ENCODE measurements at regions of chr2 and their contacts with region 1.

Region 1: GRCh38 chr2:219530048-219530963 is 13.3 kb downstream of the CHPF start:
- DNase-seq: peak; percentile 57
- H3K4me3 ChIP-seq: no peak overlapping the region
- H3K27ac ChIP-seq: no peak overlapping the region
- H3K4me1 ChIP-seq: no peaks in the 10 kb centered on the region
- H3K27me3 ChIP-seq: peaks cover 2% of the 10 kb centered on the region
- CTCF ChIP-seq: peak; percentile 93 to 99

Region 2: DNA sequence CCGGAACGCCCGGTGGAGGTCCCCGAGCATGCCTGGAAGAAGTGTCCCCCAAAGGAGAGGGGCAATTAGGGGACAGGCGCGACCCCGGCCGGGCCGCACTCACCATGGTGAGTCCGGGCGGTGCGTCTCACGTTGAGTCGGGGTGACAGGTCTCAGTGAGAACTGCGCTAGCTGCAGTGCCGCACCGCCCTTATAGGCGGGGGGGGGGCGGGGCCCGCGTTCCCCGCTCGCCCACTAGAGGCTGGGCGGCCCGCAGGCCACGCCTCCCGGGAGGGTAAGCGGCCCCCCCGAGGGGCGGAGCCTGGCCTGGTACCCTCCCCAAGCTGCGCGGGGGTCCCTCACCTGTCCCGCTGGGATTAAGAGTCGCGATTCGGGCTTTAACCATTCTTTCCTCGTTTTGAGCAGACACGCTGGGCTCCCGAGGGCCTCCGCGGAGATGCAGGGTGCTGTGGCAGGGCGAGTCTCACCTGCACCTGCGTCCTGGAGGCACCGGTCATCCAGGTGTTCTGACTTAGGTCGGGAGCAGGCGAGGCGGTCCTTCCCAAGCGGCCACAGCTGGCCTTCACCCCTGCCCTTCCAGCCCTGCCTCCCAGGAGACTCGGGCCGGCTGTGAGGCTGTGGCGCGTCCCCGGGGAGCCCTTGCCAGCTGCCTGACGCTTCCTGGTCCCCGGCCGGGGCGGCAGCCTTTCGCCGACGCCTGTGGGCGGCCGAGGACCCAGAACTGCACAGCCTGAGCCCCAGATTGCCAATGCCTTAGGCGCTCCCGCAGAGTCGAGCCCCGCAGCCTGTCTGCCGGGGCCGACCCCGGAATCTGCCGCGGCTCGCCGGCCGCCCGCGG is 276.3 kb before region 1 on chr2 and contains the start of gene TUBA4A:
- CTCF ChIA-PET with region 1: no interaction called
- dilution Hi-C with region 1: no loop called
- in situ Hi-C with region 1: no loop called
- intact Hi-C with region 1: loop called (anchors 1 kb)
- DNase-seq: peak; percentile 83
- H3K4me3 ChIP-seq: peak within 1 kb of the TSS; percentile 69 to 82 (median 81)
- H3K27ac ChIP-seq: peak within 1 kb of the TSS; percentile 76
- H3K4me1 ChIP-seq: peaks cover 48% of the 10 kb centered on the region
- H3K27me3 ChIP-seq: no peaks in the 10 kb centered on the region
- CTCF ChIP-seq: peak in 1 of 2 donors; percentile 12
- total RNA-seq, gene TUBA4A: 206 to 209 TPM

Region 3: GRCh38 chr2:219430633-219431615 is 99.4 kb before region 1 on chr2:
- CTCF ChIA-PET with region 1: interaction called, 7 read pairs
- dilution Hi-C with region 1: no loop called
- in situ Hi-C with region 1: no loop called
- intact Hi-C with region 1: loop called (anchors 1 kb)
- DNase-seq: peak; percentile 41
- H3K4me3 ChIP-seq: no peak overlapping the region
- H3K27ac ChIP-seq: no peak overlapping the region
- H3K4me1 ChIP-seq: peaks cover 6% of the 10 kb centered on the region
- H3K27me3 ChIP-seq: no peaks in the 10 kb centered on the region
- CTCF ChIP-seq: peak; percentile 24 to 64

Region 4: DNA sequence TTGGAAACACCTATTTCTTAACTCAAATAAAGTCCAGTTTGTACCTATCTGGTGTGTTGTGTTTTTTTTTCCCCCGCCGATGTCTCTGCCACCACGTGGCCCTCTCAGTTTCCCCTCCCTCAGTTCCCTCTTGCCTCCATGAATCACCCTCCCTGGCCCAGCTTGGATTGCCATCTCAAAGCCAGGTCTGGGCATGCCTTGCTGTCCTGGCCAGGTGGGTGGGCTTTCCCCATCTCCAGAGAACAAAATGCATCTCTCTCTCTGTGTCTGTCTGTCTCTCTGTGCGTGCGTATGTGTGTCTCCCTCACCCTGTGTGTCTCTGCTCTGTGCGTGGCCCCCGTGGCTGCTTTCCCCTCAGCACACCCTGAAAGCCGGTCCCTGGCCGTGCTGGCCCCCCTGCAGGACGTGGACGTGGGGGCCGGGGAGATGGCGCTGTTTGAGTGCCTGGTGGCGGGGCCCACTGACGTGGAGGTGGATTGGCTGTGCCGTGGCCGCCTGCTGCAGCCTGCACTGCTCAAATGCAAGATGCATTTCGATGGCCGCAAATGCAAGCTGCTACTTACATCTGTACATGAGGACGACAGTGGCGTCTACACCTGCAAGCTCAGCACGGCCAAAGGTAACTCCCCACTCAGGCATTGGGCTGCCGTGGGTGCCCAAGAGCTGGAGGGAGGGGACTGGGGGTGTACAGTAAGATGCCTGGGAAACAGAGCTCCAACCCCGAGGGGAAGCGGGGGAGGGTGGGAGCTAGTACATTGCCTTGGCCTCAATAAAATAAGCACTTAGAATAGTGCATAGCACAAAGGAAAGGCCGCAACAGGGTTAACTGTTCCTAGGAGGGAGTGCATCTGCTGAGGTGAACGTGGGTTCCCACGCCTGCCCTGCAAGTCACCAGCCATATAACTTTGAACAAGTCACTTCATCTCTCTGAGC is 63.2 kb before region 1 on chr2:
- CTCF ChIA-PET with region 1: interaction called, 3 read pairs
- dilution Hi-C with region 1: loop called (anchors 5 kb)
- in situ Hi-C with region 1: no loop called
- intact Hi-C with region 1: no loop called
- DNase-seq: peak; percentile 87
- H3K4me3 ChIP-seq: no peak overlapping the region
- H3K27ac ChIP-seq: peak overlapping the region; percentile 60
- H3K4me1 ChIP-seq: peaks cover 41% of the 10 kb centered on the region
- H3K27me3 ChIP-seq: no peaks in the 10 kb centered on the region
- CTCF ChIP-seq: no peak

Region 5: DNA sequence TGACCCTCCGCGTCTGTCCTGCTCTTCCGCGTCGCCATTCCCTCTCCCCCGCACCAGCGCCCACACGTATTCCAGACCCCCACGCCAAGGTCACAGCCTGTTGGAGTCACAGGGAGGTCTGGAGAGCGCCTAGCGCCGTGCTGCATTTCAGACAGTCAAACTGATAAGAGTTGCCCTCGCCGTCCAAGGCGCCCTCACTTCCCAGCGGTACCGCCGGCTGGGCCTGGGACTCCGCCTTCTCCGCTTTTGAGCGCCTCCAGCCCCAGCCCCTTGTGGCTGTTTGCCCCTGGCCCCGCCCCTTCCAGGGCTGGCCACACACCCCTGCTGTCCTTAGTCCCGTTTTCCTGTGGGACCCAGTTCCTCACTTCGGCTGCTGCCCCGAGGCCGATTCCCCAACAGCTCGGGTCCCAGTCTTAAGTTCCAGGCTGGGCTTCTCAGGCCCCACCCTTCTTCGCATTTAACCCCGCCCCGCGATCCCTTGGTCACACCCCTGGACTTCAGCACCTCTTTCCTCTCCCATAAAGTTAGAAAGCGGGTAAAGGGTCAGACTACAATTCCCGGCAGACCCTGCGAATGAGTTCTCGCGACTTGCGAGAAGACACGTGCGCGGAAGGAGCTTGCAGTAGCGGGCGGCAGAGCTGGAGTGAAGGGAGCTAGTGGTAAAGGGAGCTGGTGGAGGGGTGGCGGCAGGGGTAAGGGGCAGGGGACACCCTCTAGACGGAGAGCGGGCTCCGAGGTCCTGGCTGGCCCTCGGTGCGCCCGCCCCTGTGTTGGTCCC is 31.8 kb before region 1 on chr2 and contains the start of gene GMPPA:
- CTCF ChIA-PET with region 1: interaction called, 9 read pairs
- dilution Hi-C with region 1: no loop called
- in situ Hi-C with region 1: no loop called
- intact Hi-C with region 1: loop called (anchors 2 kb)
- DNase-seq: peak; percentile 98
- H3K4me3 ChIP-seq: peak within 1 kb of the TSS; percentile 57 to 71 (median 65)
- H3K27ac ChIP-seq: peak within 1 kb of the TSS; percentile 53
- H3K4me1 ChIP-seq: peaks cover 18% of the 10 kb centered on the region
- H3K27me3 ChIP-seq: no peaks in the 10 kb centered on the region
- CTCF ChIP-seq: no peak
- total RNA-seq, gene GMPPA: 37.8 to 50.1 TPM